ENCODE measurements at regions of chr19 and their contacts with region 1.

Region 1: DNA sequence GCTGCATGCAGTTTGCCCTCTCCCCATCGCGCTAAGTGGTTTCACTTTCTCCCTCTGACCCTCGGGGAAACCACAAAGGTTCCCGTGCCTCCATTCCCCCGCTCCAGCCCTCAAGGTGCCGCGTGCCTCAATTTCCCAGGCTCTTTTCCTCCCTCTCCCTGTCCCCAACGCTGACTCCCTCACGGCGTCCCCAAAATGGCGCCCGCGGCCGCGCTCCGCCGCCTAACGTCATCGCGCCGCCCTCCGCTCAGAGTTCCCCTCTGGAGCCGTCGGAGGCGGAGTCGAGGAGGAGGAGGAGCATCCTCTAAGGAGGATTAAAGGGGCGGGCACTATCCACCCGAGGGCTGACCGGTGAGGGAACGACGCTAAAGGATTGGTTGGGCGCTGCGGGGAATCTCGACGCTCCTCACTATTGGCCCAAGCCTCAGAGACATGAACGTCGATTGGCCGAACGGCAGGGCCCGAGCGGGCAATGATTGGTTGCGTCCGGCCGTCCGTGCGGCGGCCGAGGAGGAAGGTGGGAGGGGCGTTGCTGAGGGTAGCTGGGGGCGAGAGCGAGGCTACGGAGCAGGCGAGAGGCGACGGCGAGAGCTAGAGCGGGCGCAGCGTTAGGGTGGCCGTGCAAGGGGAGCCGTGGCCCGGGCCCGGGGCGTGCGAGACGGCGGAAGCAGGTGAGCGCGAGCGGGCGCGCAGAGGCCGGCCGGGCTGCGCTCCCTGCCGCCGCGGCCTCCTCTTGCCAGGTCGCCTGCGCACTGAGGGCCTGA is at the start of gene ZNF574:
- DNase-seq: peak; percentile 97 to 100 (median 98)
- ATAC-seq: peak; percentile 95
- H3K4me3 ChIP-seq: peak within 1 kb of the TSS; percentile 72 to 76
- H3K4me3 Mint-ChIP-seq: peak within 1 kb of the TSS; percentile 97
- H3K27ac ChIP-seq: peak within 1 kb of the TSS; percentile 94 to 100
- H3K27ac Mint-ChIP-seq: peak within 1 kb of the TSS; percentile 99
- H3K4me1 ChIP-seq: peaks cover 21% of the 10 kb centered on the region
- H3K4me1 Mint-ChIP-seq: peaks cover 37% of the 10 kb centered on the region
- H3K27me3 ChIP-seq: no peaks in the 10 kb centered on the region
- H3K27me3 Mint-ChIP-seq: no peaks in the 10 kb centered on the region
- CTCF ChIP-seq: no peak
- total RNA-seq, gene ZNF574: 25.0 to 26.2 TPM

Region 2: DNA sequence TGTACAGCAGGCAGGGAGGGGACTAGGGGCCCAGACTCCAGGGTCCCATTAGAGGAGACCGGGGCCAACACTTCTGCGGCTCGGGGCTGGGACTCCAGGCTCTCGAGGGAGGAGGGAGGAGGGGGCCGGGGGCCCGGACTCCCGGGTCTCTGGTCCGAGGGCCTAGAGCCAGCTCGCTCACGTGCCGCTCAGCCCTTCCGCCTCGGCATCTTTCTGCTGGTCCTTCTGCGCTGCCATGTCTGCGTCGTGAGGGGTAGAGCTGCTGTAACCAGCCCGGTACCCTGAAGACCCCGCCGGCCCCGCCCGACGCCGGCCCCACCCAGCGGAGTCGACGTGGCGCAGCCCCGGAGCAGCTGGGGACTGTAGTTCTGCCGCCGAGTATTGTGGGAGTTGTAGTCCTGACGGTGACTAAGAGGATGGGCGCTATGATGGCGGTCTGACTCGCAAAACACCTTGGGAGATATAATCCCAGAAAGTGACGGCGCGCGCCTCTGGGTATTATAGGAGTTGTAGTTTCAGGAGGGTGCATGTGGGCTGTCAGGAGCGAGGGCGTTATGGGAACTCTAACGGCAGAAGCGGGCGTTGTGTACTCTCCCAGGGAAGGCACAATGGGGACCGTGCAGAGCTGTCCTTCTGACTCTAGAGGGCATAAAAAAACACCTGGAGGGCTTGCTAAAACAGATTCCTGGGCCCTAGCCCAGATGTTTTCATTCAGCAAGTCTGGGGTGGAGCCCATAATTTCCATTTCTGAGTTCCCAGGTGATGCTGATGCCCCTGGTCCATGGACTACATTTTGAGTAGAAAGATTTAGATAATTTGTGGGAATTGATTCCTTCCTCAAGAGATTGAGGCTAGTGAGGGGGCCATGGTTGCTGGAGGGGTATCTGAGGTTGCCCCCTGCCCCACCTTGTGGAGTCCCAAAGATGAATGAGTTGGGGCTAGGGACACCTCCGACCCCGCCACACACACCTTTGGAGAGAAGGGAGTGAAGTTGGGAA is 116.4 kb before region 1 on chr19 and contains the start of gene RABAC1:
- CTCF ChIA-PET with region 1: no interaction called
- POLR2A ChIA-PET with region 1: no interaction called
- intact Hi-C with region 1: loop called (anchors 2 kb)
- DNase-seq: peak; percentile 73 to 93 (median 90)
- ATAC-seq: peak; percentile 87
- H3K4me3 ChIP-seq: peak within 1 kb of the TSS; percentile 80 to 91
- H3K4me3 Mint-ChIP-seq: peak within 1 kb of the TSS; percentile 97
- H3K27ac ChIP-seq: peak within 1 kb of the TSS; percentile 55 to 82
- H3K27ac Mint-ChIP-seq: peak within 1 kb of the TSS; percentile 96
- H3K4me1 ChIP-seq: peaks cover 16% of the 10 kb centered on the region
- H3K4me1 Mint-ChIP-seq: peaks cover 23% of the 10 kb centered on the region
- H3K27me3 ChIP-seq: no peaks in the 10 kb centered on the region
- H3K27me3 Mint-ChIP-seq: no peaks in the 10 kb centered on the region
- CTCF ChIP-seq: peak; percentile 26
- total RNA-seq, gene RABAC1: 99.5 to 114 TPM

Region 3: DNA sequence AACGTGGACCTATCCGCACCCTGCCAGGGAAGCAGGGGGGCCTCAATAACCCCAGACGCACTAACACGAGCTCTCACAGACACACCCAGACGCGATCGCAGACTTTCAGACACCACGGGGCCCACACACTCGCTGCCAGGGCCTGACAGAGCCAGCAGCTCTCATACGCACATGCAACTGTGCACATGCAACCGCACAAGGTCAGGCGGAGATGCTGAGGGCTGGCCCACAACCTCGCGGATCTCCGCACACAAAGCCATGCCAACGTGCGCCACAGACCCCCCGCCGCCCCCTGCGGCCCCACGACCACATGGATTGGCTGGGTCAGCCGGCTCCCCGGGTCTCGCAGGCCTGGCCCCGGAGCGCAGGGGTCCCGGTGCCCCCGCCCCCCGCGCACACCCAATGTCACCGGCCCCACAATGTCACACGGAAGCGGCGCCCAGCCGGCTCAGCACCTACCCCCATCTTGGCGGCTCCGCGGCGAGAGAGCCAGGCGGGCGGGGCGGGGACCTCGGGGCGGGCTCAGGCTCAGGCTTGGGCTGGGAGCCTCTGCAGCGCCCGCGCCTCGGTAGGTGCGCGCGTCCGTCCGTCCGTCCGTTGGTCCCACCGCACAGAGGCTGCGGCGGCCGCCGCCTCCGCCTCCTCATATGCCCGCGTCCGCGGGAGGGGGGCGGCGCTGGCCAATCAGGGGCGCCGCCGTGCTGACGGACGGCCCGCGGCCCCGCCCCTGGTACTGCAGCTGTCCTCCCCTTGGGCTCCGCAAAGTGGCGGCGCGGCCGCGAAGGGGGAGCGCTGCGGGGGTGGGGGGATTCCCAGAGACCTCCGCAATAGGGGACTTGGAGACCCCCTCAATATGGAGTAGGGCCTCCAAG is 82.0 kb before region 1 on chr19 and contains the start of gene ATP1A3:
- CTCF ChIA-PET with region 1: no interaction called
- POLR2A ChIA-PET with region 1: no interaction called
- intact Hi-C with region 1: loop called in 1 of 2 experiments (anchors 1 kb)
- DNase-seq: peak; percentile 32 to 82 (median 64)
- ATAC-seq: peak; percentile 72
- H3K4me3 ChIP-seq: peak within 1 kb of the TSS; percentile 62 to 87
- H3K4me3 Mint-ChIP-seq: peak within 1 kb of the TSS; percentile 92
- H3K27ac ChIP-seq: no peak within 1 kb of the TSS
- H3K27ac Mint-ChIP-seq: peak within 1 kb of the TSS; percentile 60
- H3K4me1 ChIP-seq: peaks cover 18% of the 10 kb centered on the region
- H3K4me1 Mint-ChIP-seq: peaks cover 38% of the 10 kb centered on the region
- H3K27me3 ChIP-seq: peaks cover 23 to 28% of the 10 kb centered on the region in 2 experiments
- H3K27me3 Mint-ChIP-seq: peaks cover 32% of the 10 kb centered on the region
- CTCF ChIP-seq: no peak
- total RNA-seq, gene ATP1A3: 10.2 to 12.3 TPM

Region 4: GRCh38 chr19:42095814-42096230 is 20.0 kb after region 1 on chr19:
- CTCF ChIA-PET with region 1: no interaction called
- POLR2A ChIA-PET with region 1: no interaction called
- intact Hi-C with region 1: no loop called
- DNase-seq: no peak
- ATAC-seq: no peak
- H3K4me3 ChIP-seq: no peak overlapping the region
- H3K4me3 Mint-ChIP-seq: no peak overlapping the region
- H3K27ac ChIP-seq: no peak overlapping the region
- H3K27ac Mint-ChIP-seq: no peak overlapping the region
- H3K4me1 ChIP-seq: no peaks in the 10 kb centered on the region
- H3K4me1 Mint-ChIP-seq: peaks cover 7% of the 10 kb centered on the region
- H3K27me3 ChIP-seq: no peaks in the 10 kb centered on the region
- H3K27me3 Mint-ChIP-seq: no peaks in the 10 kb centered on the region
- CTCF ChIP-seq: no peak

Region 5: DNA sequence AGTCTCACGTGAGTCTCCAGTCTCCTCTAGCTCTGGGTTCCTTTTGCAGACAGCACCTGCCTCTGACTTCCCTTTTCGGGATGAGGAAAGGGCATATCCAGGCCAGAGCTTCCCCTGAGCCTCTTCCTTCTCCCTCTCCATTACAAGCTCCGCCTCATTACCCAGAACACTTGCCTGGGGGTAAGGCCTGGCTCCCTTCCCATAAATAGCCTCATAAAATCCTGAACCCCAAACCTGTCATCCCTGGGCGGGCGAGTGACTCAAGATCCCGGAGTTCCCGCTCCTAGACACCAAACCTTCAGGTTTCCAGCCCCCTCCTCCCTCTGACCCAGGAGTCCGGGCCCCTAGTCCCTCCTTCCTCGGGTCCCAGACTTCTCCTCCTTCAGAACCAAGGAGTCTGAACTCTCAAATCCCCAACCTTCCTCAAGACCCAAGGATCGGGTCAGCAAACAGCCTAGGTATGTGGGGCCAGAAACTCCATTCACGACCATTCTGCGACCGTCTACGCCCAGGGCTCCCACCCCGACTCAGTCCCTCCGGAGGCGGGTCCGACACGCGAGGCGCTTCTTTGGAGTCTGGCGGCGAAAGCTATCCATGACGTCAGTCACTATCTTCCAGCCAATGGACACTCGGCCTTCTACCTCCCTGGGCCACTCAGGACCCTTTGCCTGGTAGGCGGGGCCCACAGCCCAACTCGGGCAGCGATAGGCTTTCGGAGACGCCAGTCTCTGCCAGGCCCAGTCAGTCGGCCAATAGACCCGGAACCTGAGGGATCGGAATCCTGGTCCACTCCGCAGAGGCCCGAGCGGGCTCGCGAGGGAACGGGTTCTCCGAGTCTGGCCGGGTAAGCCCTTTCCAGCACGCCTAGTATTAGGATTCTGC is 320.8 kb after region 1 on chr19:
- CTCF ChIA-PET with region 1: no interaction called
- POLR2A ChIA-PET with region 1: no interaction called
- intact Hi-C with region 1: no loop called
- DNase-seq: peak; percentile 83 to 95 (median 90)
- ATAC-seq: peak; percentile 86
- H3K4me3 ChIP-seq: peak overlapping the region; percentile 55 to 75
- H3K4me3 Mint-ChIP-seq: peak overlapping the region; percentile 82
- H3K27ac ChIP-seq: peak overlapping the region; percentile 46 to 83
- H3K27ac Mint-ChIP-seq: peak overlapping the region; percentile 50
- H3K4me1 ChIP-seq: peaks cover 21% of the 10 kb centered on the region
- H3K4me1 Mint-ChIP-seq: peaks cover 40% of the 10 kb centered on the region
- H3K27me3 ChIP-seq: no peaks in the 10 kb centered on the region
- H3K27me3 Mint-ChIP-seq: no peaks in the 10 kb centered on the region
- CTCF ChIP-seq: no peak

Measured in CD8-positive, alpha-beta T cell (primary cell).